A549 (cell line): ENCODE measurements at regions of chr1 and their contacts with region 1.

Region 1: GRCh38 chr1:156838981-156839410 is 19.9 kb downstream of the INSRR start:
- DNase-seq: peak in 1 of 2 experiments; percentile 72
- ATAC-seq: peak; percentile 60 to 85; a peak in 5 of 6 replicates
- H3K4me3 ChIP-seq: no peak overlapping the region
- H3K27ac ChIP-seq: no peak overlapping the region
- H3K4me1 ChIP-seq: no peaks in the 10 kb centered on the region
- CTCF ChIP-seq: peak; percentile 81
- EP300 ChIP-seq: no peak
- POLR2A ChIP-seq: no peak
- RAD21 ChIP-seq: peak; percentile 83 to 87

Region 2: GRCh38 chr1:156797212-156797871 is 41.7 kb before region 1 on chr1:
- CTCF ChIA-PET with region 1: interaction called, 13 read pairs
- POLR2A ChIA-PET with region 1: no interaction called
- DNase-seq: peak; percentile 68 to 75
- ATAC-seq: peak; percentile 89 to 91
- H3K4me3 ChIP-seq: no peak overlapping the region
- H3K27ac ChIP-seq: no peak overlapping the region
- H3K4me1 ChIP-seq: no peaks in the 10 kb centered on the region
- CTCF ChIP-seq: peak; percentile 87
- EP300 ChIP-seq: no peak
- POLR2A ChIP-seq: no peak
- RAD21 ChIP-seq: peak; percentile 72 to 78

Region 3: GRCh38 chr1:156813750-156814570 is 25.0 kb before region 1 on chr1:
- CTCF ChIA-PET with region 1: interaction called, 25 read pairs
- POLR2A ChIA-PET with region 1: no interaction called
- DNase-seq: peak; percentile 73
- ATAC-seq: peak; percentile 83 to 91
- H3K4me3 ChIP-seq: peak overlapping the region; percentile 39
- H3K27ac ChIP-seq: peak overlapping the region; percentile 76 to 86
- H3K4me1 ChIP-seq: peaks cover 24% of the 10 kb centered on the region
- CTCF ChIP-seq: peak; percentile 59
- EP300 ChIP-seq: no peak
- POLR2A ChIP-seq: peak; percentile 60
- RAD21 ChIP-seq: peak; percentile 13 to 34; a peak in 2 of 5 replicates

Region 4: DNA sequence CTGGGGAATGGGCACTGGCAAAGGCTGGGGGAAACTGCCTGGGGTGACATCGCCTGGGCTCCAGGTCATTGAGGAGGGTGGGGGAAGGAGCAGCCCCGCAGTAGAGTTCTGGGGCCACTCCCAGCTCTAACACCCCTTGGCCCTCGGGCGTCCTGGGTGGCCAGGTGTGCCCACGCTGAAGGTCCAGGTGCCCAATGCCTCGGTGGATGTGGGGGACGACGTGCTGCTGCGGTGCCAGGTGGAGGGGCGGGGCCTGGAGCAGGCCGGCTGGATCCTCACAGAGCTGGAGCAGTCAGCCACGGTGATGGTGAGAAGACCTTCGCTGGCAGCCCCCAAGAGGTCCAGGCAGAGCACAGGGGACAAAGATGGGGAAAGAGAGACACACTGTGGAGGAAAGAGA is 29.3 kb after region 1 on chr1:
- CTCF ChIA-PET with region 1: interaction called, 289 read pairs
- POLR2A ChIA-PET with region 1: no interaction called
- DNase-seq: no peak
- ATAC-seq: no peak
- H3K4me3 ChIP-seq: no peak overlapping the region
- H3K27ac ChIP-seq: no peak overlapping the region
- H3K4me1 ChIP-seq: peaks cover 13% of the 10 kb centered on the region
- CTCF ChIP-seq: no peak
- EP300 ChIP-seq: no peak
- POLR2A ChIP-seq: no peak
- RAD21 ChIP-seq: no peak

Region 5: GRCh38 chr1:156910309-156910782 is 71.3 kb after region 1 on chr1:
- CTCF ChIA-PET with region 1: interaction called, 26 read pairs
- POLR2A ChIA-PET with region 1: no interaction called
- DNase-seq: peak; percentile 43 to 66
- ATAC-seq: peak; percentile 52 to 78; a peak in 4 of 6 replicates
- H3K4me3 ChIP-seq: no peak overlapping the region
- H3K27ac ChIP-seq: peak overlapping the region in 1 of 2 experiments; percentile 52; a peak in 2 of 6 replicates
- H3K4me1 ChIP-seq: peaks cover 20% of the 10 kb centered on the region
- CTCF ChIP-seq: peak; percentile 83
- EP300 ChIP-seq: no peak
- POLR2A ChIP-seq: no peak
- RAD21 ChIP-seq: peak; percentile 37 to 50; a peak in 4 of 5 replicates